ENCODE measurements at regions of chr10 and their contacts with region 1.

Region 1: DNA sequence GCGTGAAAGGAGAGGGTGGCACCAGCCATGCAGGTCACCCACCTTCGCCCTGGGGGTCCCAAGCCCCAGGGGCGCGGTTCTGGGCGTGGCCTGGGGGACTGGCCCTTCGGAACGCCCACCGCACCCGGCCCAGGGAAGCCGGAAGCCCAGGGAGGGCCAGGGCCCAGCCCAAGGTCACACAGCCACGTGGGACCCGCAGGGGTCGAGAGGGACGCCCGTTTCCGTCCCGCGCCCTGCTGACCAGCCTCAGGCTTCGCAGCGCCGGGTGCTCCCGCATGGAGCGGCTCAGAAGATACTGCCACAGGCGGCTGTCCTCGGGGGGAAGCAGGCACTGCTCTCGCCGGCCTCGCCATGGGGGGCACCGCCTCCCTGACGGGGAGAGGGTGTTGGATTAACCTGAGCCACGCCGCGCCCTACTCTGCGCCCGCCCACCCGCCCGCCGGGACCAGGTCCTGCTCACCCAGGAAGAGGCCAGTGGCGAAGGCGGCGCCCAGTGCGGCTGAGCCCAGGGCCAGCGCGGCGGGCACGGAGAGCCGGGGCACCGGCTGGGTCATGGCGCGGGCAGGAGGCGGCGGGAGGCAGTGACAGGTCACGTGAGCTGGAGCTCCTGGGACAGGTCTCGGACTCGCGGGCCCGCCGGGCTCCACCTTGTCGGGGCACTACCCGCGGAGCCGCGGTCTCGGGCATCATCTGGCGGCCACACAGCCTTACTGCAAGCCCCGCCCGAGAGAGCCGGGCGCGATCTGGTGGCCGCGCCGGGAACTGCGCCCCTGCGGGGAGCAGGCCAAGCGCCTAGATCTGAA is at the start of gene COMTD1:
- DNase-seq: peak; percentile 95 to 96
- ATAC-seq: peak; percentile 63 to 78
- H3K4me3 ChIP-seq: peak within 1 kb of the TSS; percentile 78
- H3K27ac ChIP-seq: peak within 1 kb of the TSS; percentile 92 to 98
- H3K4me1 ChIP-seq: peaks cover 18% of the 10 kb centered on the region
- CTCF ChIP-seq: peak; percentile 100
- EP300 ChIP-seq: no peak
- POLR2A ChIP-seq: no peak; the same call in none of the 2 replicates
- RAD21 ChIP-seq: peak; percentile 95 to 100
- polyA plus RNA-seq, gene COMTD1: 9.5 and 9.8 TPM in 2 replicates

Region 2: GRCh38 chr10:75019370-75019769 is 216.2 kb before region 1 on chr10:
- CTCF ChIA-PET with region 1: interaction called, 11 read pairs
- POLR2A ChIA-PET with region 1: no interaction called
- DNase-seq: peak in 1 of 2 experiments; percentile 35
- ATAC-seq: peak; percentile 55 to 67; a peak in 3 of 6 replicates
- H3K4me3 ChIP-seq: no peak overlapping the region
- H3K27ac ChIP-seq: no peak overlapping the region
- H3K4me1 ChIP-seq: peaks cover 6% of the 10 kb centered on the region; the same call in 1 of the 3 replicates
- CTCF ChIP-seq: peak; percentile 71
- EP300 ChIP-seq: no peak
- POLR2A ChIP-seq: no peak
- RAD21 ChIP-seq: peak; percentile 70 to 78

Region 3: DNA sequence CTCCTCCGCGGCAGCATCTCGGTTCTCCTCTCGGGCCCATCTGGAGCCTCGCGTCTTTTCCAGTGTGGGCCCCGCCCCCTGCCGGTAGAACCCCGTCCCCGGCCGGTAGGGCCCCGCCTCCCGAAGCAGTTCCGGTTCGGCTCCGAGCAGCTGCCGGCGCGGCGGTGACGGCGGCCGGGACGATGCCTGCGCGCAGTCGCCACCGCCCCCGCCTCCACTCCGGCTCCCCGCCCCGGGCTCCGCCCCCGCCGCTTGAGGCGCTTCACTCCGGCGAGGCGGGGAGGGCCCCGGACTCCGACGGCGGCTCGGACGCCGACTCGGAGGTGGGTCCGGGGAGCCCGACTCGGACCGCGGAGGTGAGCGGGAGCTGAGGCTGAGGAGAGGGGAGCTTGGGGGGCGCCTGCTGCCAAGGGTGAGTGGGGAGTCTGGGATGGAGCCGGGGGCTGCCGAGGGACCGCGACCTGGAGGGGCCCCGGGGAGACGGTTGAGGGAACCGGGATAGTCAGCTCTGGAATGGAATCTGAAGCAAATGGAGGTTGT is 124.1 kb before region 1 on chr10 and contains the start of gene SAMD8:
- CTCF ChIA-PET with region 1: interaction called, 61 read pairs
- POLR2A ChIA-PET with region 1: interaction called, 5 read pairs
- DNase-seq: peak in 1 of 2 experiments; percentile 98
- ATAC-seq: peak; percentile 82 to 89
- H3K4me3 ChIP-seq: peak within 1 kb of the TSS; percentile 66
- H3K27ac ChIP-seq: peak within 1 kb of the TSS; percentile 82 to 94
- H3K4me1 ChIP-seq: peaks cover 37% of the 10 kb centered on the region
- CTCF ChIP-seq: no peak
- EP300 ChIP-seq: no peak
- POLR2A ChIP-seq: peak; percentile 76
- RAD21 ChIP-seq: no peak
- polyA plus RNA-seq, gene SAMD8: 27.9 and 33.3 TPM in 2 replicates

Region 4: DNA sequence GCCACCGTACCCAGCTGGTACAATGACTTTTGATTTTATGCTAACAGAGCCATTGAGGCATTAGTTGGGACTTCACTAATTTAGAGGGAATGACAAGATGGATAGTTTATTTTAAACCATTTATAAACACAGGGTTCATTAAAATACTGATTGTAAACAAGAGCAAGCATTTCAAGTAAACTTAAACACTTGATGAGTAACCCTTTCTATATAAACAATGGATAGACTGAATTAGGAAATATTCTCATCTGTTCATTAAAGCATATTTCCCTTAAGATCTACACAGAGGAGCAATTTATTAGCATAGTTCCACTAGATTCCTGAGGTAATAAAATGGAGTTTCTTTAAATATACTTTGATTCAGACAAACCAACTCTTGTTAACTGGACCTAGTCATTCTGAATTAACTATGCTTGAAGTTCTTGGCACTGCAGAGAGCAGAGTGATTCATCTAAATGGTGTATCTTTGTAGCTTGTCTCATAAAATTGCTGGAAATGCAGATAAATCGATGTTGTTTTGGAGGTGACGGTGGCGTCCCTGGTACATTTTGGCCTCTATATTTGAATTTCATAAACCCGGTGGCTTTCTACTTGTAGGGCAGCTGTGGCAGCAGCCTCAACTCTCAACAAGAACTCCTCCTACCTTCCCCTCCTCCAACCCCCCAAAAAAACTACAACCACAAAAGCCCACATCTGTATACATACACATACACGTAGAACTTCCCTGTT is 40.4 kb before region 1 on chr10:
- CTCF ChIA-PET with region 1: interaction called, 479 read pairs
- POLR2A ChIA-PET with region 1: interaction called, 3 read pairs
- DNase-seq: no peak
- ATAC-seq: no peak
- H3K4me3 ChIP-seq: no peak overlapping the region
- H3K27ac ChIP-seq: peak overlapping the region; percentile 90 to 95
- H3K4me1 ChIP-seq: peaks cover 72% of the 10 kb centered on the region
- CTCF ChIP-seq: no peak
- EP300 ChIP-seq: no peak
- POLR2A ChIP-seq: no peak
- RAD21 ChIP-seq: no peak

Region 5: DNA sequence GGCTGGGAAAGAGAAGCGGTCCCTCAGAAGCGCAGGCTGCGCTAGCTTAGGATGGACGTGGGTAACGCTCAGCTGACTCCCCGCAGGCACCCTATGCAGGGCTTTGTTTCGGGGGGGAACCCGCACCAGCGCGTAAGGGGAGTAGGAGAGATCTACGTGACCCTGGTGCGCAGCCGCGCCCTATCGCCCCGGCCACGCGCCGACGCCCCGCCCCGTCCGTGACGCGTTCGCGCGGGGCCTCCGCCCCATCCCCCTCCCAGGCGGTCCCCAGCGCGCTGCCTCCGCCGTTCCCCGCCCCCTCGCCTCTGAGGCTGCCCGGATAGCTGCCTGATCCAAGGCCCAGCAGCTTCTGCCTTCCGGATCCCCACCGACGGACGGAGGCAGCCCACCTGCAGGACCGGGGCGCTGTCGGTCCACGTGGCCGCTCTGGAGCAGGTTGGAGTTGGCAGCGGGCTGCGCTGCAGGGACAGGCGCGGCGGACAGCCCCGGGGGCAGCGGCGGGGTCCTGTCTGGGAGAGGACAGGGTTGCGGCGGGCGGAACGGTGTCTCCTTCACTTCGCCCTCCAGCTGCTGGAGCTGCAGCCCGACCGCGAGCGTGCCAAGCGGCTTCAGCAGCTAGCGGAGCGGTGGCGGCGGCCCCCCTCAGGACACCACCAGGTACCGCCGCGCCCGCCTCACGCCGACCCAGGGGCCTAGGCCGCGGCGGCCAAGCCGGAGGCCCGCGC is 25.1 kb before region 1 on chr10 and contains the start of gene VDAC2:
- CTCF ChIA-PET with region 1: interaction called, 119 read pairs
- POLR2A ChIA-PET with region 1: interaction called, 21 read pairs
- DNase-seq: peak; percentile 77 to 93
- ATAC-seq: peak; percentile 85 to 88
- H3K4me3 ChIP-seq: peak within 1 kb of the TSS; percentile 83
- H3K27ac ChIP-seq: peak within 1 kb of the TSS; percentile 99
- H3K4me1 ChIP-seq: peaks cover 57% of the 10 kb centered on the region
- CTCF ChIP-seq: no peak
- EP300 ChIP-seq: peak in 1 of 2 experiments; percentile 29; a peak in 1 of 5 replicates
- POLR2A ChIP-seq: peak; percentile 67
- RAD21 ChIP-seq: no peak; a peak in 2 of 5 replicates
- polyA plus RNA-seq, gene VDAC2: 262 and 285 TPM in 2 replicates

Region 6: DNA sequence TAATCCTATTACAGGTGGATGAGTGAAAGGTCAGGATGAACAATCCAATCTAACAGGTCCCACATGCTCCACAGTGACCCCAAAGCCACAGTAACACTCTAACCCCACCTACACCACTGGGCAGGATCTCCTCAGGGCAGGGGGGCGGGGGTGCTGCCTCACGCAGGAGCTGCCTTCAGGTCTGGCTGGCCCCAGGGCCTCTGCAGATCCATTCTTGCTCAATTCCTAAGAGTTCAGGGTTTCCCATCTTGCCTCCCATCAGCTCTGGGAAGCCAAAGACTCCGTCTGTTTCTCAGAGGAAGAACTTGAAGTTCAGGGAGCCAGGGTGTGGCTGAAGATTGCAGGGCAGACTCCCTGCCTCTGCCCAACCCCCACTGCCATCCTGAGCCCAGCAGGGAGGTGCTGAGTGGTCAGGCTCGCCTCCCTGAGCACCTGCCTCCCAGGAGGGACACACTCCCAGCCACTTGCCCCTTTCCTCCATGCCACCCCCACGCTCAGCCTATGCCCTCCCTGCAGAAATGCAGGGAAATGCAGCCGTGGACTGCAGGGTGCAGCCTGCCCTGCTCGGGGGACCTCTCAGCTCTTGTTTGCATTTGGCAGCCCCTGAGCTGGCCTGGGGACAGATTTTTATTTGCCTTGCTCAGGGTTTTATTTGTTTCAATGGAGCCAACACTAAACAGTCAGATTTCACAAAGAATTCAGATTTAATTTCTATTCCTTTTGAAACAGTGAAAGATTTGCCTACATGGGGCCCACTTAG is 10.1 kb after region 1 on chr10:
- CTCF ChIA-PET with region 1: interaction called, 42 read pairs
- POLR2A ChIA-PET with region 1: no interaction called
- DNase-seq: peak in 1 of 2 experiments; percentile 14
- ATAC-seq: peak; percentile 33 to 48; a peak in 5 of 6 replicates
- H3K4me3 ChIP-seq: no peak overlapping the region
- H3K27ac ChIP-seq: peak overlapping the region; percentile 57 to 60; a peak in 5 of 6 replicates
- H3K4me1 ChIP-seq: peaks cover 15% of the 10 kb centered on the region
- CTCF ChIP-seq: no peak
- EP300 ChIP-seq: no peak
- POLR2A ChIP-seq: no peak
- RAD21 ChIP-seq: no peak

Region 7: DNA sequence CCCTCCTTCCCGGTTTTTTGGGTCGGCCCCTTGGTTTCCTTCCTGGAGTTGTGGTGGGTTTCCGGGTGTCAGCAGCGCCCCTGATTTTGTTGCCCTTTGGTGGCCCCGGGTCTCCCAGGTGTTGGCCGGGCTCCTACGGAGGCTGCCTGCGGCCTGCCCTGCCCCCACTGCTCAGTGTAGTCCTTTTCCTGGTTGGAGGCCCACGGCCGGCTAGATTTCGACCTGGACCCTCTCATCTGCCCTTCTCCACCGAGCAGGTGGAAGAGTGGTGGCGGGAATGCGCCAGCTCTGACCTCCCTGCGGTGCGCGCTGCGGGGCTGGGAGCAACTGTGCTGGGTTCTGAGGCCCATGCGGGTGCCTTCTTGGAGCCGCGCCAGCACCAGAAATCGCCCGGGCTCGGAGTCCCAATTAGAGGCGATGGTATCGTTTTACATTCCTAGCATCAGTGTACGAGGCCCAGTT is 40.9 kb after region 1 on chr10:
- CTCF ChIA-PET with region 1: no interaction called
- POLR2A ChIA-PET with region 1: no interaction called
- DNase-seq: no peak
- ATAC-seq: no peak
- H3K4me3 ChIP-seq: no peak overlapping the region
- H3K27ac ChIP-seq: no peak overlapping the region
- H3K4me1 ChIP-seq: peaks cover 6% of the 10 kb centered on the region; the same call in 2 of the 3 replicates
- CTCF ChIP-seq: no peak
- EP300 ChIP-seq: no peak
- POLR2A ChIP-seq: no peak
- RAD21 ChIP-seq: no peak

Measured in A549 (cell line).